Activated CD4-positive, alpha-beta T cell treated with anti-CD3 and anti-CD28 coated beads, Interleukin-2, amount 10 ng/mL, durations not matched to agents 24 days and 14 days (primary cell): ENCODE measurements at regions of chr2 and their contacts with region 1.

Region 1: DNA sequence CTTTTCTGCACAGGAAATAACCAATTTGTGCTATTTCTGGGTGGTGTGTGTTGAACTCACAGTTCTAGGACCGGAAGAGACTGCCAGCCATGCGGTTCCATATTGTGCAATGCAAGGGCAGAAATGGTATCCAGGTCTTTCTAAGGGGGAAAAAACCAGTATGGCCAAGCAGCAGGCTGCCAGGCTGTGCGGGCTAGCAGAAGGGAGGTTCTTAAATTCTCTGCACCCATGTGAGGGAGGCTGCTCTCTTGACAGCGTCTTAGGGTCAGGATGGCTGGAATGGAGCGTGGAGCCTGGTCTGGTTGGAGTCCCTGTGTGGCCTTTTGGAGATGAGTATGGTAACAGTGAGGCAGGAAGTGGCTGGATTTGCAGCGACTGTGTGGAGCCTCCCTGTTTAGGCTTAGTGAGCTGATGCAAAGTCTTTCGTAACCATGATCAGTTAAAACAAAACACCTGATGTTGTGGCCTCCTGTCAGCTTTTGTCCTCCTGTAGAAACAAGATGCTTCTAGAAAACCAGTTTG is 52.6 kb downstream of the NCK2 start:
- DNase-seq: peak; percentile 85
- H3K4me3 Mint-ChIP-seq: peak overlapping the region; percentile 63
- H3K27ac Mint-ChIP-seq: peak overlapping the region; percentile 93
- H3K4me1 Mint-ChIP-seq: peaks cover 80% of the 10 kb centered on the region
- H3K27me3 Mint-ChIP-seq: no peaks in the 10 kb centered on the region

Region 2: DNA sequence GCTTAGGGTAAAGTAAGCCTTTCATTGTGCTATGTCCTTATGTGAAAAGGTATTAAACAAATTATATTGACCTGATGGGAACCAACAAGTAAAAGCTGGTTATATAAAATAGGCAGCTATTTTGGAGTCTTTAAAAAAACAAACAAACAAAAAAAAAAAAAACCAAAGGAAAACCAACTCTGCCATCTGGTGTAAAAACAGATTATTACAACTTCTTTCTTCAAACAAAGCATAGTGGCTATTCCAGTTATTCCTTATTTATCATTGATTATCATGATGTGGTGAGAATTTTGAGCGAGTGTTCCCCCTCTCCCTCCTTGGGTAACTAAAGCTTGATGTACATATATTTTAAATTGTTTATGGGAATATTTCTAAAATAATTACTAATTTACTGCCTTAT is 276.2 kb before region 1 on chr2:
- intact Hi-C with region 1: no loop called
- DNase-seq: no peak
- H3K4me3 Mint-ChIP-seq: no peak overlapping the region
- H3K27ac Mint-ChIP-seq: no peak overlapping the region
- H3K4me1 Mint-ChIP-seq: no peaks in the 10 kb centered on the region
- H3K27me3 Mint-ChIP-seq: no peaks in the 10 kb centered on the region

Region 3: DNA sequence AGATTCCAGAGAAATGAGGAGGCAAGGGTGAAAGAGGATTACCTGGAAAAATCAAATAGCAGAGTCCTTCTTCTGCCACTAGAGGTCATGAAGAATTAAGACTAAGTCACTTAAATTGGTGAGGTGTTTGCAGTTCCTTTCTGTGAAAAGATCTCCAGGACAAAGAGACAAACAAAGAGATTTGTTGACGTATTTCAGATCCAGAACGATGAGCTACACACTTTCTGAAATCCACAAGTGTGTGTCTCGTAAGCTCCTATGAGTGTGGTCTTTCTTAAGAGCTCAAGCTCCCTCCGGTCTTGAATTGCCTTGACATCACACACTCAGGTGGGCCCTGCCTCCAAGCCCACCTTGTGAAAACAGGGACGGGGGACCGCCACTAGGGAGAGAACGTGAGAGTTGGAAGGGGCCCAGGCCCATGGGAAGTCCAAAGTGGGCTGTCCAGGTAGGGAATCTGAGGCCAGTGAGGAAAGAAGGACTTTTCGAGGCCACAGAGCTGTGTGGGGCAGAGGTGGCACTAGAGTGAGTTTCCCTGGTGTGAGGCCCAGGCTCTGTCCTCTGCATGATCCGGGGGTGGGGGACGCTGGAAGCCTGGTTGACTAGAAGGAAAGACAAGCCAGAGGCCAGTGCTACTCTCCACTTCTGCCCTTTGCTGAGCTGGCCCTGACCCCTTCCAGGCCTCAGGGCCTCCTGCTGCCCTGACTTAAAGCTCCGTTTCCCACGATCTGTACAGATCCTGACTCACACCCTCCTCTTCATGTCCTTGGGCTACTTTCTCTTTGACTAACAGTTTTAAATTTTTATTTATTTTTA is 220.7 kb before region 1 on chr2:
- intact Hi-C with region 1: loop called (anchors 5 kb)
- DNase-seq: peak; percentile 61
- H3K4me3 Mint-ChIP-seq: no peak overlapping the region
- H3K27ac Mint-ChIP-seq: peak overlapping the region; percentile 23
- H3K4me1 Mint-ChIP-seq: peaks cover 16% of the 10 kb centered on the region
- H3K27me3 Mint-ChIP-seq: peaks cover 7% of the 10 kb centered on the region

Region 4: GRCh38 chr2:105782123-105782522 is 15.2 kb before region 1 on chr2:
- intact Hi-C with region 1: loop called (anchors 1 kb)
- DNase-seq: no peak
- H3K4me3 Mint-ChIP-seq: peak overlapping the region; percentile 17
- H3K27ac Mint-ChIP-seq: peak overlapping the region; percentile 31
- H3K4me1 Mint-ChIP-seq: peaks cover 77% of the 10 kb centered on the region
- H3K27me3 Mint-ChIP-seq: no peaks in the 10 kb centered on the region

Region 5: DNA sequence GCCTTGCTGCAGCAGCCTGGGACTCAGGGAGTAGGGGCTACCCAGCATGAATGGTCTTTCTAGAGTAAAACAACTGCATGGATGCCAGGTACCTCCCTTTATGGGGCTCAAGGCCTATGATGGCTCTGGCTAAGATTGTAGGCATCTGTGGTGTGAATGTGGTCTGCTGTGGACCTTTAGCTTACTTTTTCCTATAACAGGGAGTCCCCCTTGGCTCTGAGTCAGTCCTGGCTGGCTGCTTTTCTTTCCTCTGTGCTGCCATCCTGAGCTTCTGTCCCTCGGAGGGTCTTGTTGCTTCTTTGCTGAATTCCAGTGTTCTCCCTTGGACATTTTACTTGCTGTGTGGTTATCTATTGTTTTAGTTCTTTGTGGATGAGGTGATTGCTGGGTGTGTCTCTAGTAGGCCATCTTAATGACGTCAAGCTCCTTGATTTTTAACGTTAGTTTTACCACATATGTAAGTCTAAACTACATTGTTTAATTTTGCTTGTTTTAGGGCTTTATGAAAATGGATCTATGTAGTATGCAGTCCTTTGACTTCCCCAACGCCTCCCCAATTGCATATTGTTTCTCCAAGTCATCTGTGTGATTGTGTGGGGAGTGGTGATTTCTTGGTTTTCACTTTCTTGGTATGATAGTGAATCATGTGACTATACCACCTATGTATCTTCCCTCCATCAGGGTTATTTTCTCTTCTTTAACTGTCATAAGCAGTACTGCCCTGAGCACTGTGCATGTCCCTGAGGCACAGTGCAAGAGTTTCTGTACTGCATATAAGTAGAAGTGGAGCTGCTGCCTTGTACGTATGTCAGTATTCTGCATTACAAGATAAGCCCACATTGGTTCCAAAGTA is 39.7 kb after region 1 on chr2:
- intact Hi-C with region 1: loop called (anchors 1 kb)
- DNase-seq: no peak
- H3K4me3 Mint-ChIP-seq: peak overlapping the region; percentile 52
- H3K27ac Mint-ChIP-seq: peak overlapping the region; percentile 77
- H3K4me1 Mint-ChIP-seq: peaks cover 73% of the 10 kb centered on the region
- H3K27me3 Mint-ChIP-seq: no peaks in the 10 kb centered on the region

Region 6: GRCh38 chr2:105929516-105929915 is 132.2 kb after region 1 on chr2:
- intact Hi-C with region 1: loop called (anchors 5 kb)
- DNase-seq: peak; percentile 79
- H3K4me3 Mint-ChIP-seq: peak overlapping the region; percentile 44
- H3K27ac Mint-ChIP-seq: peak overlapping the region; percentile 66
- H3K4me1 Mint-ChIP-seq: peaks cover 42% of the 10 kb centered on the region
- H3K27me3 Mint-ChIP-seq: no peaks in the 10 kb centered on the region

Region 7: DNA sequence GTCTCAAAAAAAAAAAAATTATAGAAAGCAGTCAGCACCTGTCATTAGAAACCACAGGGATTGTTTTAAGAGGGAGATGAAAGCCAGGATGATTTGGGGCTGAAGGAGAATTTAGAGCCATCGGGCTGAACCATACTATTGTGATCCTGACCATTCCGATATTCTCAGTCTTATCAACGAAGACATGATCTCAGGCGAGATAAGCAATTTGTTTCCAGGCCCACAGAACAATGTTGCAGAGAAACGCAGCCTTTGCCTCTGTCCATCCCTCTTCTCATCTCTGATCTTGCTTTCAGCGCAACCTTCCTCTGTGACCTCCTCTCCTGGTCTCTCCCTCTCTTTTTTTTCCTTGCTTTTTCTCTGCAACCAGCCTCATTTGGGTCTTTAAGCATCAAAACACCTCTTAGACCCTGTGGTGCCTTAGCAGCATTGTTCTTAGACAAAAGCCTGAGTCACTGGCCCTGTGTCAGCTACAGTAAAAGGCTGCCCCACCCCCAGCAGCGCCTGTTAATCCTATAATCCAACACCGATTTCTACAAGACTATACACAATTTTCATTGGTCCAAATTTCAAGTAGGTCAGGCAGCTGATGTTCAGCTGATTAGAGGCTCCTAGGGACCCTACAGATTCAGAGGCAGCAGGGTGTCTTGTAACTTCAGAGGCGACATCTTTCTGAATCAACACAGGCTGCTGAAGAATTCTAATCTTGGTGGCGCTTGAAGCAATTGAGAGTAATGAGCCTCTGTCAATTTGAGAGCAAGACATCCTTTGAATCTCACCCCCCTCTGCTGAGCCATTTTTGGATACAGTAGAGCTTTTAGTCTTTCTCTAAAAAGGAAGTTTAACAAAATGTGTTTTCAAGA is 153.4 kb after region 1 on chr2:
- intact Hi-C with region 1: no loop called
- DNase-seq: no peak
- H3K4me3 Mint-ChIP-seq: no peak overlapping the region
- H3K27ac Mint-ChIP-seq: peak overlapping the region; percentile 57
- H3K4me1 Mint-ChIP-seq: peaks cover 24% of the 10 kb centered on the region
- H3K27me3 Mint-ChIP-seq: peaks cover 3% of the 10 kb centered on the region

Region 8: DNA sequence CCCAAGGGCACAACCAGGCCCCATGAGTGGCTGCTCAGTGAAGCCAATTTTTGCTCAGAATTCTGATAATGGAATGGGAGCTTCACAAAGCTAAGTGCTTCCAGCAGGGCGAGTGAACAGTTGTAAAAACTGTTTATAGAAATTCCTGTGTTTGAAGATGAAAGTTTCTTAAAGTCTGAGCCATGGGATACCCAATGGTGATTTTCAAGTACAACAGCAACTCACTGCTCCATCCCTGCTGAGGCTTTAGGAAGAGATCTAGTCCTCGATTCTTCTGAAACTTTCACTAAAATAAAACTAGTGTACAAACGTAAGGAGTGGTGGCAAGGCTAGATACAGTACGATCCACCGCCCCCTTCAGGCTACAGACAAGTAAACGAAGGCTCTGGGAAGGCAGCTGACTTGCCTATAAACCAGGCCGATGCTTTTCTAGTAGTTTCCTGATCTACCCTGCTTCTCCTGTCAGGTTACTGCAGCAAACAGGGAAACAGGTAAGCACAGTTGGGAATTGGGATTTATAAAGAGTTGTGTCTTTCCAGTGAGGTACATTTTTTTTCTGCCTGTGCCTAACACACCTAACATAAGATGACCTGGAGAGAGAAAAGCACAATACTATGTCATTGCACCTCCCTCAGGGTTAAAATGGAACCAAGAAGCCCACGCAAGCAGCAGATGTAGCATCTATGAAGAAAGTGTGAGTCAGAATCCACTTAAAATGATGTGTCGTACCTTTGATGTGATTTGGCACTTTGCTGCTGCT is 288.0 kb after region 1 on chr2:
- intact Hi-C with region 1: loop called (anchors 5 kb)
- DNase-seq: peak; percentile 86
- H3K4me3 Mint-ChIP-seq: peak overlapping the region; percentile 60
- H3K27ac Mint-ChIP-seq: peak overlapping the region; percentile 73
- H3K4me1 Mint-ChIP-seq: peaks cover 28% of the 10 kb centered on the region
- H3K27me3 Mint-ChIP-seq: no peaks in the 10 kb centered on the region